Activated CD8-positive, alpha-beta T cell treated with anti-CD3 and anti-CD28 coated beads for 36 hours (primary cell): ENCODE measurements at regions of chr1 and their contacts with region 1.

Region 1: DNA sequence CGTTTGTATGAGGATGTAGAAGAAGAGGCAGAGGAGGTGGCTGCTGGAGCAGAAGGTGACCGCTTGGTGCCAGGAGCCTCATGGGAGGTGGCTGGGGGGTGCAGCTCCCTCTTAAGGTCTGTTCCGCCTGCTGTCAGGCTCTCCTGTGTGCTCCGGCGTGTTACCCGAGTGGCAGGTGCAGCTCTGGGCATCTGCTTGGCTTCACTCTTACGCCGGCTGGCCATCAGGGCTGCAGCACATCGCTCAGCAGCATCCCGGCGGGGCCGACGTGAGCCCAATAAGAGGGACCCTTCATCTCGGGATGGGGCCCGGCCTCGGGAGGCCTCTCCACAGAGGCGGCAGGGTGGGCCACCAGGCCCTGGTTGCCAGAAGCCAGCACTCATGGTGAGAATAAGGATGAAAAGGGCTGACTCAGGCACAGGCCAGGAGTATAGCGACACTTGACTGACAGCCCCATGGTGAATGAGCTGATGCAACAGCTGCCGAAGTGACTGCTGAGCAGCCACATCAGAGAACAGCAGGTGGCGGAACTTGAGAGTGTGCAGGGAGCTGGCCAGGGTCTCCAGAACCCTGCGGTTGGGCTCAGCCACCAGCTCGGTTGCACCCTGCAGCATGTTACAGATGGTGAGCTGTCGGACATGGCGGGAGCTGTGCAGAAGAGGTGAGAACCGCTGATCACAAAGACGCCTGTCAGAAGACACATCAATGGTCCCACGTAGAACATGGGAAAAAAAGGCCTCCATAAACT is 17.5 kb downstream of the LRRC41 start:
- DNase-seq: peak; percentile 77
- ATAC-seq: peak; percentile 92
- H3K4me3 Mint-ChIP-seq: no peak overlapping the region
- H3K27ac Mint-ChIP-seq: peak overlapping the region; percentile 89
- H3K4me1 Mint-ChIP-seq: peaks cover 21% of the 10 kb centered on the region
- H3K27me3 Mint-ChIP-seq: no peaks in the 10 kb centered on the region
- CTCF ChIP-seq: no peak

Region 2: DNA sequence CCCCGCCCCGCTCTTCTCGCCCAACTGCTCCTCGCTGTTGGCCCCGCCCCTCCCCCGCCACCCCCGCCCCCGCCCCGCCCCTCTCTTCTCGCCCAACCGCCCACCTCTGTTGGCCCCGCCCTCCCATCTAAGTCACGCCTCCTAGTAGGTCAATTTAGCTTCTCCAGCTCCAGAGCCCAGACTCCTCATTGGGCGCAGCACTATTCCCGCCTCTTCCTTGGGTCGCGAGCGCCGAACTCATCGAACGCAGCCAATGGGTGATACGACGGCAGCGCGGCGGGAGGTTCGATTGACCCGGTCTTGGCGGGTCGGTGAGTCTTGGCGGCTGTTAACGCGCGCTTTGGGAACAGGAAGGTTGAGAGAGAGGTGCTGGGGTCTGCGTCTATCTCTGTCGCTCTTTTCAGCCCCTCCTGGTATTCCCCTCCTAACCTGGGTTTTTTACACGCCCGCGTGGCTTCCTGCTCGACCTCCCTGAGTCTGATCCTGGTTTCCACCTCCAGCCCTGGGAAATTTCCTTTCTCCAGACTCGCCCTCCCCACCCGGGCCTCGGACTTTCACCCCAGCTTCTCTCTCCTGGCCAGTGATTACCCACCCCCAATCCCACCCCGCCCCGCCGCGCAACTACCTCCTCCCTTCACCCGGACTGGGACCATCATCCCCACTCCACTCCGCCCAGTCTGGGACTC is 38.3 kb before region 1 on chr1 and contains the start of gene RAD54L:
- CTCF ChIA-PET with region 1: interaction called, 6 read pairs
- POLR2A ChIA-PET with region 1: interaction called, 18 read pairs
- intact Hi-C with region 1: no loop called
- DNase-seq: peak; percentile 100
- ATAC-seq: peak; percentile 91
- H3K4me3 Mint-ChIP-seq: peak within 1 kb of the TSS; percentile 95
- H3K27ac Mint-ChIP-seq: peak within 1 kb of the TSS; percentile 99
- H3K4me1 Mint-ChIP-seq: peaks cover 24% of the 10 kb centered on the region
- H3K27me3 Mint-ChIP-seq: no peaks in the 10 kb centered on the region
- CTCF ChIP-seq: no peak
- total RNA-seq, gene RAD54L: 64.6 to 65.1 TPM

Region 3: GRCh38 chr1:46262508-46262907 is 23.4 kb before region 1 on chr1:
- CTCF ChIA-PET with region 1: interaction called, 4 read pairs
- POLR2A ChIA-PET with region 1: interaction called, 10 read pairs
- intact Hi-C with region 1: no loop called
- DNase-seq: no peak
- ATAC-seq: no peak
- H3K4me3 Mint-ChIP-seq: no peak overlapping the region
- H3K27ac Mint-ChIP-seq: no peak overlapping the region
- H3K4me1 Mint-ChIP-seq: no peaks in the 10 kb centered on the region
- H3K27me3 Mint-ChIP-seq: no peaks in the 10 kb centered on the region
- CTCF ChIP-seq: no peak

Region 4: DNA sequence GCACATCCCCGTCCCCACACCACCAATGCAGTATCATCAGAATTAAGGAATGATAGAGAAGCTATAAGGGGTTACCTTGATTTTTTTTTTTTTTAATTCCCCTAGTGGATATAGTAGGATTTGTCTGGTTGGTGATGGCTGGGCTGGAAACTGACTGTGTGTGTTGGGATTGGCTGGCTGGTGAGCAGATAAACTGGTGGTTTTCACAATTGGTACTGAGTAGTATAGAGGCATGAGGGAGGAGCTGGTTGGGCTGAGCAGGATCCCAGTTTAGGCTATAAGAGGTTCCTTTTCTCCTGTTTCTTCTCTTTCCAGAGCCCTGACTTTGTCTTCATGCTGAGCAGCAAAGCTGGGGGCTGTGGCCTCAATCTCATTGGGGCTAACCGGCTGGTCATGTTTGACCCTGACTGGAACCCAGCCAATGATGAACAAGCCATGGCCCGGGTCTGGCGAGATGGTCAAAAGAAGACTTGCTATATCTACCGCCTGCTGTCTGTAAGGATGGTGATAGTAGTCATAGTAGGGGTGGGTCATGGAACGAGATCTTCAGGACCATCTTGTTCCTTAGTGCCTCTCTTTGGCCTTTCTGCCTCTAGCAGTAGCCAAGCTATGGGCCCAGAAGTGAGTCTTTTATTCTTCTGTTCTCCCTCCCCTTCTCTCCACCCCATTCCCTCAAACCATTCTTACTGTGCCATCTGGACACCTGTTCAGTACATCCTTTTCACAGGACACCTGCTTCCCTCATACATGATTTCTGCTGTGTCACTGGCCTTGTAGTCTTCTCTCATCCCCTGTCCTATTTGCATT is 11.5 kb before region 1 on chr1:
- CTCF ChIA-PET with region 1: interaction called, 6 read pairs
- POLR2A ChIA-PET with region 1: interaction called, 13 read pairs
- intact Hi-C with region 1: no loop called
- DNase-seq: no peak
- ATAC-seq: no peak
- H3K4me3 Mint-ChIP-seq: no peak overlapping the region
- H3K27ac Mint-ChIP-seq: no peak overlapping the region
- H3K4me1 Mint-ChIP-seq: no peaks in the 10 kb centered on the region
- H3K27me3 Mint-ChIP-seq: no peaks in the 10 kb centered on the region
- CTCF ChIP-seq: no peak

Region 5: DNA sequence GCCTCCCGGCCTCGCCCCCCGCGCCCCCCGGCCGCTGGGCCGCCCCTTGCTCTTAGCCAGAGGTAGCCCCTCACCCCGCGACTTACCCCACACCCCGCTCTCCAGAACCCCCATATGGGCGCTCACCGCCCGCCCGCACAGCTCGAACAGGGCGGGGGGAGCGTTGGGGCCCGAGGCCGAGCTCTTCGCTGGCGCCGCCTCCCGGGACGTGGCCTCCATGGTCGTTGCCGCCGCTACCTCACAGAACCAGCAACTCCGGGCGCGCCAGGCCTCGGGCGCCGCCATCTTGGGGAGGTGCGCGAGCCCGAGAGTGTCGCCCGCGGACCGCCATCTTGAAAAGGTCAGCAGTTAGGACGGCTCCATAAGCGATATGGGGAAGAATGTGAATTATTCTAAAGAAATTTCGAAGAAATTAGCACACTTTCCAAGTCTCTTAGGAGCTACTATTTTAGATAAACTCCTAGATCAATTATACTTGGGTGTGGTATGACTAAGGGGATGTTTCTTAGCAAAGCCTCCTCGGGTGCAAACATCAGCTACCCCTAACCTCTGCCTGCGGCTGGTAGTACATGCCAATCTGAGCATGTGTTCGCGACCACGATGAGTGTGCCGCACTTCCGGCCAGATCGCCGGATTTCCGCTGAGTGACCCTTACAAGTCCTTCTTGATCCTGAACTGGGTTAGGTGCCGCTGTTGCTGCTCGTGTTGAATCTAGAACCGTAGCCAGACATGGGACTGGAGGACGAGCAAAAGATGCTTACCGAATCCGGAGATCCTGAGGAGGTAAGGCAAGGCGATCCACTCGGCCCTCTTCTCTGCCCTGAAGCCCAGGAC is 17.4 kb after region 1 on chr1 and contains the starts of genes LRRC41 and UQCRH:
- CTCF ChIA-PET with region 1: interaction called, 10 read pairs
- POLR2A ChIA-PET with region 1: interaction called, 16 read pairs
- intact Hi-C with region 1: no loop called
- DNase-seq: peak; percentile 94
- ATAC-seq: peak; percentile 89
- H3K4me3 Mint-ChIP-seq: peak within 1 kb of the TSS; percentile 99
- H3K27ac Mint-ChIP-seq: peak within 1 kb of the TSS; percentile 99
- H3K4me1 Mint-ChIP-seq: peaks cover 48% of the 10 kb centered on the region
- H3K27me3 Mint-ChIP-seq: no peaks in the 10 kb centered on the region
- CTCF ChIP-seq: no peak
- total RNA-seq, gene LRRC41: 32.1 to 32.2 TPM
- total RNA-seq, gene UQCRH: 391 to 396 TPM

Region 6: DNA sequence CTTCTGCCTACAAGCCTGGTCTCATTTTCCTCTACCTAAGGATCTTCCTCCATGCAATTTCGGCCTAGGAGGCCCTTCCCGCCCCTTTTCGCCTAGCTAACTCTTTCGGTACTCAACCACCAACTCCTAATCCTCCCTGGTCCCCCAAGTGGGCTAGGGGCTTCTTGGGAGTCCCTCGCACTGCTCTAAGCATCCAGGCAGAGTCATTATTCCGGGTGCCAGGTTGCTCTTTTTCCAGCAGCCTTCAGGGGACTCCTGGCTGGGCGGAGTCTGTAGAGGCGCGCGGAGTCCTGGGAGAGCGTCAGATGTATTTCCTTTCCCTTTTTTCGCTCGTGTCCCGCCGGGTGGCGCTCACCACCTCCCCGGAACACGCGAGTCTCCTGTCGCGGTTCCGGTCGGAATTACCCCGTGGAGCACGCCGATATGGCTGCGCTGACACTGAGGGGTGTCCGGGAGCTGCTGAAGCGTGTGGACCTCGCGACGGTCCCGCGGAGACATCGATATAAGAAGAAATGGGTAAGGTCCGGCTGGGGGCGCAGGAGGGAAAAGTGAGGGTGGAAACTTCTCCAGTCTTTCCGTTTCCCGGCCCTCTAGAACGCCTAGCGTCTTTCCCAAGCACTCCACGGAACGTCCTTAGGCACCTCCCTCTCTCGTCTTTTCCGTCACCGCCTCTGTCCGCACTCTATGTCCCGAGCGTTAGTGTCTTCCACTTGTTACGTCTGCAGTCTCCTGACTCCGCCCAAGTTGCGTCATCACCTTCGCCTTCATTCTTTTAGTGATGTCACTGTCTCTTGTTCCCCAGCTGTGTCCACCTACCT is 54.7 kb after region 1 on chr1 and contains the start of gene NSUN4:
- CTCF ChIA-PET with region 1: interaction called, 5 read pairs
- POLR2A ChIA-PET with region 1: interaction called, 13 read pairs
- intact Hi-C with region 1: no loop called
- DNase-seq: peak; percentile 92
- ATAC-seq: peak; percentile 95
- H3K4me3 Mint-ChIP-seq: peak within 1 kb of the TSS; percentile 100
- H3K27ac Mint-ChIP-seq: peak within 1 kb of the TSS; percentile 99
- H3K4me1 Mint-ChIP-seq: peaks cover 47% of the 10 kb centered on the region
- H3K27me3 Mint-ChIP-seq: no peaks in the 10 kb centered on the region
- CTCF ChIP-seq: peak; percentile 81
- total RNA-seq, gene NSUN4: 28.5 to 29.3 TPM